Right lobe of liver (tissue), 6 donors: ENCODE measurements at regions of chr1 and their contacts with region 1.

Region 1: DNA sequence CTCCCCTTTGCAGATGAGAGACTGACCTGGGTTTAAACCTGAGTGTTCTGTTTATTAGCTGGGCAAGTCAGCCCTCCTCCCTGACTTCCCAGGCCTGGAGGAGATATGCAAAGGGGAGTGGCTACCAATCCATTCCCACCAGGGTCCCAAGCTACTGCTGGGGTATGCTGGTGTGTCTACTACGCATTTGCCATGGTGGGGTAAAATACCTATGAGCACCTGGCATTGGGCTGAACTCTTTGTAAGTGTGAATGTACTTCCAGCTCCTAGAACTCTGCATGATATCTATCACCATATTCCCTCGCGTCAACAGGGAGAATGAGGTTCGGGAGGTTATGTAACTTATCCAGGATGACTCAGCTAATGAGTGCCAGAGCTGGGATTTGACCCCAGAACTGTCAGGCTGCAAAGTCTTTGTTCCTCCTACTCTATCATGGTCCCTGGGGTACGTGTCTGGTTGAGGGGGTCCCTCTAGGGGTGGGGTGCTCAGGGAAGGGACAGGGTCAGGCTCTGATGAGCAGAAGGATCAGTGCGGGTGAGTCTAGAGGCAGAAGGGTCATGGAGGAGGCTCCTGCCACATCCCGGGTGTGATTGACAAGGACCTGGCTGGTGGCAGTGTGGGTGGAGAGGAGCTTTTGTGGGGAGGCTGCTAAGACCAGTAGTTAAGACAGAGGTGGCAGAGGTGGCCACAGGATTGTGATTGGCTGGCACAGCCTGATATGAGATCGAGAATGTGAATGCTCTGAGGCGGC is 16.7 kb downstream of the AMPD2 start:
- DNase-seq: no peak
- ATAC-seq: peak in 3 of 4 donors; percentile 49 to 78 (median 72)
- H3K4me3 ChIP-seq: no peak overlapping the region
- H3K27ac ChIP-seq: peak overlapping the region in 1 of 3 donors; percentile 55
- H3K4me1 ChIP-seq: peaks cover 0 to 10% (median 0%) of the 10 kb centered on the region in 4 donors
- H3K27me3 ChIP-seq: no peaks in the 10 kb centered on the region
- CTCF ChIP-seq: no peak
- POLR2A ChIP-seq: no peak

Region 2: DNA sequence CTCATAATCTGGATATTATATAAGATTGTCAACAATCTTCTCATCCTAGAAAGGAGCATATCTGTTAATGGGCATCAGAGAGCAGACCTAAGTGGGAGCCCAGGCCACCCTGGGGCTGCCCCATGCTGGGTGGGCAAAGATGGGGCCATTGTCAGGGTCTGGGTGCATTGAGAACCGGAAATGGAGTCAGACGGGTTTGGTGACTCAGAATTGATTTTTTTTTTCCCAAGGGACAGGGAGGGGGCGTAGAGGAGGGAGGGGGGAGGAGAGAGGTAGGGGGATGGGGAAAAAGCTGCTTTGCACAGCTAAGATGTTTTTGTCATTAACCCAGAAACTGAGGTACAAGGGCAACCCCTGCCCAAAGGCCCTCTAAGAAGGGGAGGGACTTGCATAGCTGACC is 151.4 kb before region 1 on chr1:
- intact Hi-C with region 1: loop called in 1 of 2 experiments (anchors 5 kb)
- DNase-seq: no peak
- ATAC-seq: no peak
- H3K4me3 ChIP-seq: no peak overlapping the region
- H3K27ac ChIP-seq: no peak overlapping the region
- H3K4me1 ChIP-seq: peaks cover 0 to 3% (median 0%) of the 10 kb centered on the region in 4 donors
- H3K27me3 ChIP-seq: no peaks in the 10 kb centered on the region
- CTCF ChIP-seq: no peak
- POLR2A ChIP-seq: no peak